ENCODE measurements at regions of chr6 and their contacts with region 1.

Region 1: GRCh38 chr6:118934461-118935330 is at the start of gene MCM9:
- DNase-seq: peak; percentile 43
- ATAC-seq: peak; percentile 99
- H3K4me3 ChIP-seq: peak within 1 kb of the TSS; percentile 96 to 97
- H3K27ac ChIP-seq: peak within 1 kb of the TSS; percentile 91
- H3K4me1 ChIP-seq: peaks cover 17% of the 10 kb centered on the region; the same call in 1 of the 2 replicates
- H3K27me3 ChIP-seq: no peaks in the 10 kb centered on the region
- CTCF ChIP-seq: no peak
- total RNA-seq, gene MCM9: 20.4 TPM

Region 2: DNA sequence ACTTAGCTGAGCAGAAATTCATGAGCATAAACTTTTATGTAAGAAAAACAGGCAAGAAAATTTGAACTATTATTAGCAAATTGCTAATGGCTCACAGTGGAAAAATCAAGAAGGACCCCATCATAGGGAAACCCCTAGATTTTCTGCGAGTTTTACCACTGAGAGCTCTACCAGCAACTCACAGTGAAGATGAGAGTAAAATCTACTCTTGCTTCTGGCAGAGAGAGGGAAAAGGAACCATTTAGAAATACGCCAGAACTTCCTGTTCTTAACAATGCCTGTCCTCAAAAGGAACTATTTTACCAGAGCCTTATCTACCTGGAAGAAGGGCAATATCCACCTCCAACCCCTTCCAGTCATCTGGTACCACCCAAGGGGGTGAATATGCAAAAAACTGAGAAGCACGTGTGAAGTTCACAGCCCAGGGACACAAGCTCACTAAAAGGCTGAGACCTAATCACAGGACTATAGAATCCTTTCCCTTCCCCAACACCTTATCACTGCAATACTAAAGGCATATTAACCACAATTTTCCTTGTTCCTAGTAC is 75.1 kb before region 1 on chr6:
- CTCF ChIA-PET with region 1: no interaction called
- POLR2A ChIA-PET with region 1: interaction called, 17 read pairs
- in situ Hi-C with region 1: no loop called
- intact Hi-C with region 1: no loop called
- DNase-seq: no peak
- ATAC-seq: no peak
- H3K4me3 ChIP-seq: no peak overlapping the region
- H3K27ac ChIP-seq: no peak overlapping the region
- H3K4me1 ChIP-seq: peaks cover 8% of the 10 kb centered on the region
- H3K27me3 ChIP-seq: no peaks in the 10 kb centered on the region
- CTCF ChIP-seq: no peak